ENCODE measurements at regions of chr9 and their contacts with region 1.

Region 1: DNA sequence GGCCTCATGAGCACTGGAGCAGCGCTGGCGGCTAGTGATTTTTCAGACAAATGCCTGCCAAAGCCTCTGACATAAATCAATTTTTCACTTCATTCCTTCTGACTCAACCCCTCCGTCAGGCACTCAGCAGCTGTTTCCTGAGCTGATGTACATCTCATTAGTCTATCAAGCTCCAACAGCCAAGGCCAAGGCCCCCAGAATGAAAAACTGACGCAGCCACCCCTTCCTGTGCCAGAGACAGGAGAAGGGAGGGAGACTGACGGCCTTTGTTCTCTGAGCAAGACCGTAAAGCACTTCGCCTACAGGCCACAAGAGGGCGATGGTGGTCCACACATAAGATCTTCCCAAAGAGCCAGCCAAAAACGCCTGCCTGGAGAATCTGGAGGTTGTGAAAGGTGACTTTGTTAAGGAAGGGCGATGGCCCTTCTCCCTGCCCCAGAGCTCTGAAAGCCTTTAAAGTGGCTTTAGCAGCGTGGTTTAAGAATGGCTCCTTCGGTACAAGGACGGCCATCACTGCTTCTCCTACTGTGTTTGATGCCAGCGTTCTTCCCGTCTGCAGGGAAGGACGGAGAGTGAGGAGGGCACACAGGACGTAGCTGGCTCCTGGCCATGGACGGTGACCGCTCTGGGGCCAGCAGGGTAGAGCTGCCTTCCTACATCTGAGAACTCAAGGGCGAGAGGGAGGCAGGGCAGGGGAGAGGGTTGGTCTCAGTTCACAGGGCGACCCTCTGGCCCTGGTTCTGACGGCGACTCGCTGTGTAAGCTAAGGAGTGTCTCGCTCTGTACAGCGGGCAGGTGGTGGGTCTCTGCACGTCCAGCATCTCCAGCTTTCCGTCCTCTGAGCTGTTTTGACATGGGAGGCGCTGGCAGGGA is 37.0 kb downstream of the ALG2 start:
- DNase-seq: peak; percentile 90 to 93
- ATAC-seq: peak; percentile 93
- H3K4me3 ChIP-seq: no peak overlapping the region
- H3K27ac ChIP-seq: no peak overlapping the region
- H3K4me1 ChIP-seq: no peaks in the 10 kb centered on the region
- H3K27me3 ChIP-seq: no peaks in the 10 kb centered on the region

Region 2: GRCh38 chr9:98678242-98678842 is 506.4 kb before region 1 on chr9:
- intact Hi-C with region 1: no loop called
- DNase-seq: no peak
- ATAC-seq: no peak
- H3K4me3 ChIP-seq: no peak overlapping the region
- H3K27ac ChIP-seq: no peak overlapping the region
- H3K4me1 ChIP-seq: no peaks in the 10 kb centered on the region
- H3K27me3 ChIP-seq: peaks cover 0 to 3% of the 10 kb centered on the region in 2 donors

Region 3: DNA sequence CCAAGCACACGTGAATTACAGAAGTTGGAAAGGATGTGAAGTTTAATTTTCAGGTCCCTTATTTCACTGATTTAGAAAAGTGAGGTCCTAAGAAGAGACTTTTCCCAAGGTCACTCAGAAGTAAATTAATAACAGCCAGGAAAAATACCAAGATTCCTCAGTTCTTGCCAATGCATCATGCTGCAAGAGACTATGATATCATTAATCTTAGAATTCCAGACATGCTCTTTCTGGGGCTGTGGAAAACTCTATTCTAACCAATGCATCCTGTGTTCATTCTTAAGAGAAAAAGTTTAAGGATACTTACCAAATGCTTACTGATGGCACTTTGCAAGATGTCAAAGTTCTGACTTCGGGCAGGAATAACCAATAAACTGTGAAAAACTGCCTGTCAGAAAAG is 1125.3 kb after region 1 on chr9:
- intact Hi-C with region 1: loop called in 1 of 2 experiments (anchors 10 kb)
- DNase-seq: no peak
- ATAC-seq: no peak
- H3K4me3 ChIP-seq: no peak overlapping the region
- H3K27ac ChIP-seq: no peak overlapping the region
- H3K4me1 ChIP-seq: peaks cover 0 to 5% of the 10 kb centered on the region in 2 donors
- H3K27me3 ChIP-seq: no peaks in the 10 kb centered on the region